Activated T-helper 1 cell treated with anti-CD3 and anti-CD28 coated beads, Interleukin-12 subunit alpha, Interleukin-12 subunit beta, Interleukin-2, Interleukin-4 antibody, amounts not matched to agents 30 ng/mL and 10 ng/mL and 1 ng/mL, durations not matched to agents 14 hours and 24 hours and 36 hours (primary cell): ENCODE measurements at regions of chr6 and their contacts with region 1.

Region 1: DNA sequence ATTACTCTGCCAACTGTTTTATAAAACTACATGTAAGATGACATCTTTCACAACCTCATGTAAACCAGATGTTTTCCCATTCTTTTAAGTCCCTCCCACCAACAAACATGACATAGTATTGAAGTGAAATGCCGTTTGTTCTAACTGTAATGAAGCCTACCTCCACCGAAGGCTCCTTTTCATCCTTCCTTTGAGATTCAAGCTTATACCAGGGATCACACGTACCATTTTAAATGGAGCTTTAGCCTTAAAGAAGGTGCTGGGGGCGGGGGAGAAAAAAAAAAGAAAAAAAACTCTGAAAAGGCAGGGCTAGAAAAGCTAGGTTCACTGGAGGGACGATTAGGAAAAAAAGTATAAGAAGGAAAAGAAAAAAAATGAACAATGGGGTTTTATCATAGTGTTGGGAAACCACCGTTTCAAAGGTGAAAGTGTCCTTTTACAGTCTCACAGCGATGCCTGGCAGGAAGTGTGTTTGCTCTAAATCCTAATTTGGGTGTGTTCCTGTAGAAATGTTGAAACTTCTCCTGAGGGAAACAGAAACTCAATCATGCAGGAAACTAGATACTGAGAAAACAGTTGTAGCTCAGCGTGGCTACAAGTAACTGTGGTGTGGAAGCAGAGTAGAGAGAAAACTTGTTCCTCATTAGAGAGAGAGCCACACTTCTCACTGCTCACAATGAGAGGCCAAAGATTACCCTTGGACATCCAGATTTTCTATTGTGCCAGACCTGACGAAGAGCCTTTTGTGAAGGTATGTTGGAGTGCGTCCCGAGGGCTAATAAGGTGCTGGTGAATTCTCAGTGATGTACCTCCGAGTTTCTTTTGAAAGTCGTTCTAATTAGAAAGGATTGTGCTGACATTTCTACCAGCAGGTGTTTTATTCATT is 37.6 kb upstream of the HINT3 start:
- DNase-seq: peak; percentile 66
- H3K4me3 Mint-ChIP-seq: peak overlapping the region; percentile 88
- H3K27ac Mint-ChIP-seq: peak overlapping the region; percentile 94
- H3K4me1 Mint-ChIP-seq: peaks cover 58% of the 10 kb centered on the region
- H3K27me3 Mint-ChIP-seq: no peaks in the 10 kb centered on the region

Region 2: GRCh38 chr6:125867483-125867935 is 51.4 kb before region 1 on chr6:
- intact Hi-C with region 1: no loop called
- DNase-seq: no peak
- H3K4me3 Mint-ChIP-seq: no peak overlapping the region
- H3K27ac Mint-ChIP-seq: no peak overlapping the region
- H3K4me1 Mint-ChIP-seq: no peaks in the 10 kb centered on the region
- H3K27me3 Mint-ChIP-seq: no peaks in the 10 kb centered on the region

Region 3: DNA sequence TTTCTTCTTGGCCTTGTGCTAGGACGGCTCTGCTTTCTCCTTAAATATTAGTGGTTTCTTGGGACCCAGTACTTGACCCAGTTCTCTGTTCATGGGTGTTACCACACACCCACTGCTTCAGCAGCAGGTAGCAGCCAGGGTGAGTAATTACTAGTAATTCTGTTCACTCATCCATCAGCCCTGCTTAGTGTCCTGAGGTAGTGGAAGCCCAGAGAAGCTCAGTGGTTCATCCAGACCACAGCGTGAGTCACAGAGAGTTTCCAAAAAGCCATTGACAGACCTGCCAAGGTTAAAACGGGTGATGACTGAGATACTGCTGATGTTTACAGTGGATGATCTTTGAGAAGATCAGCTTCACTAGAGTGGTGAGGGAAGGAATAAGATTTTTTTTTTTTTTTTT is 14.1 kb before region 1 on chr6:
- intact Hi-C with region 1: loop called (anchors 1 kb)
- DNase-seq: peak; percentile 42
- H3K4me3 Mint-ChIP-seq: peak overlapping the region; percentile 60
- H3K27ac Mint-ChIP-seq: peak overlapping the region; percentile 93
- H3K4me1 Mint-ChIP-seq: peaks cover 63% of the 10 kb centered on the region
- H3K27me3 Mint-ChIP-seq: no peaks in the 10 kb centered on the region

Region 4: DNA sequence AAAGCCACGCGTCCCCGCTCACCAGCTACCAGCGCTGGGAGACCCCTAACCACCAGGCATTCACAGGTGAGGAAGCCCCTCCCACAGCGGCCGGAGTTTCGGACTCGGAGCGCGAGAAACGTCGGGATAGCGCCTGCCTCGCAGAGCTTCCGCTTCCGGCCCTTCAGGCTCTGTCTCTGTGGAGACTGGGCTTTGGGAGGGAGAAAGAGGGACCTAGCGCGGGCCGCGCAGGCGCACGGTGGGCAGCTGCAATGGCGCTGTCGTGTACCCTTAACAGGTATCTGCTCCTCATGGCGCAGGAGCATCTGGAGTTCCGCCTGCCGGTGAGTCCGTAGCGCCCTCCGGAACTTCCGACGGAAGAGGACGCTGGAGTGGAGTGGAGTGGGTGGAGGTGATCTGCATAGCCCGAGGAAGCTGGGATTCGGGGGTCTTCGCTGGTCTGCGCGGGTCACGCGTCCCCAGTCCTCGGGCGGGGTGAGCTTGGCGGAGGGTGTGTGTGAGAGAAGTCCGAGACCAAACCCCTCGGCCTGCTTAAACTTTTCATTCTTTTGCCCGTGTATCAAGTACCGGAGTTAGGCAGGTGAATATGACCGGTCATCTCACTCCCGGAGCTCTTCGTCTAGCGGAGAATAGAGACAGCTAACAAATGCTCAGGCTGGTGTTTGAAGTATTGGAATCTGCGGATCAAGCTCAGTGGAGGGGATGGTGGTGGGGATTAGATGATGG is 67.5 kb after region 1 on chr6 and contains the start of gene TRMT11:
- intact Hi-C with region 1: loop called (anchors 2 kb)
- DNase-seq: peak; percentile 72
- H3K4me3 Mint-ChIP-seq: no peak within 1 kb of the TSS
- H3K27ac Mint-ChIP-seq: no peak within 1 kb of the TSS
- H3K4me1 Mint-ChIP-seq: peaks cover 8% of the 10 kb centered on the region
- H3K27me3 Mint-ChIP-seq: no peaks in the 10 kb centered on the region
- total RNA-seq, gene TRMT11: 27.9 and 29.1 TPM in 2 replicates

Region 5: GRCh38 chr6:126153661-126154060 is 234.7 kb after region 1 on chr6:
- intact Hi-C with region 1: no loop called
- DNase-seq: no peak
- H3K4me3 Mint-ChIP-seq: no peak overlapping the region
- H3K27ac Mint-ChIP-seq: no peak overlapping the region
- H3K4me1 Mint-ChIP-seq: no peaks in the 10 kb centered on the region
- H3K27me3 Mint-ChIP-seq: peaks cover 2% of the 10 kb centered on the region